ENCODE measurements at regions of chr2 and their contacts with region 1.

Region 1: GRCh38 chr2:47782671-47783485 is at the start of gene MSH6:
- DNase-seq: peak; percentile 95
- ATAC-seq: peak; percentile 87
- H3K4me3 Mint-ChIP-seq: peak within 1 kb of the TSS; percentile 94
- H3K27ac Mint-ChIP-seq: peak within 1 kb of the TSS; percentile 90
- H3K4me1 Mint-ChIP-seq: peaks cover 16% of the 10 kb centered on the region
- H3K27me3 Mint-ChIP-seq: no peaks in the 10 kb centered on the region
- total RNA-seq, gene MSH6: 86.3 to 89.1 TPM

Region 2: GRCh38 chr2:47402805-47403608 is 379.9 kb before region 1 on chr2 and contains the start of gene MSH2:
- POLR2A ChIA-PET with region 1: interaction called, 15 read pairs
- DNase-seq: peak; percentile 89
- ATAC-seq: peak; percentile 92
- H3K4me3 Mint-ChIP-seq: peak within 1 kb of the TSS; percentile 99
- H3K27ac Mint-ChIP-seq: peak within 1 kb of the TSS; percentile 96
- H3K4me1 Mint-ChIP-seq: peaks cover 26% of the 10 kb centered on the region
- H3K27me3 Mint-ChIP-seq: no peaks in the 10 kb centered on the region
- total RNA-seq, gene MSH2: 43.9 to 46.8 TPM

Region 3: DNA sequence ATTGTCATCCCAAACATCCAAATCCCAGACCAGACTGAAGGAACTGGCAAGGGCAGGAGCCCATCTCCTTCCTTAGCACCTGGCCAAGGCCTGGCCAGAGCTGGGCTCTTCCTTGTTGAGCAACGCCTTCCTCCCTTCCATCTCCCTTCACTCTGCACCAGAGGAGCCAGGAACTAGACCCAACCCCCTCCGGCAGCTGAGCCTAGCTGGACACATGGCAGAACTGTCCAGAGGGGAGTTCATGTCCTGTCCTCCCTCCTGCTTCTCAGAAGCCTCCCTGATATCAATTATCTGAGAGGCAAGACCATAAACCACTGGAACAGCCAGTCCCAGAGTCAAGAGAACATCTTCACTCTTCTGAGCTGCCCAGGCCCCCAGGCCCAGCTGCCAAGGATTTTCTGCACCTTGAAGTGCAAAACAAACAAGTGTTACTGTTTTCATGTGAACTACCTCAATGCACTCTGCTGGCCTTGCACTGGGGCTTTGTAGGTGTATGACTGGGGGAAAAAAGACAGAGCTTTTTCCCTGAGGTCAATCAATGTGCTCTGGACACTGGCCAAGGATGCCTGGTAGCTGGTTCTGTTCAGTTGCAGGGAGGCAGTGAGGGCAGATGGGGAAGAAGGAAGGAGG is 107.6 kb before region 1 on chr2:
- POLR2A ChIA-PET with region 1: no interaction called
- DNase-seq: no peak
- ATAC-seq: no peak
- H3K4me3 Mint-ChIP-seq: no peak overlapping the region
- H3K27ac Mint-ChIP-seq: no peak overlapping the region
- H3K4me1 Mint-ChIP-seq: no peaks in the 10 kb centered on the region
- H3K27me3 Mint-ChIP-seq: peaks cover 4% of the 10 kb centered on the region

Region 4: GRCh38 chr2:47719099-47719498 is 63.8 kb before region 1 on chr2:
- POLR2A ChIA-PET with region 1: no interaction called
- DNase-seq: no peak
- ATAC-seq: no peak
- H3K4me3 Mint-ChIP-seq: no peak overlapping the region
- H3K27ac Mint-ChIP-seq: no peak overlapping the region
- H3K4me1 Mint-ChIP-seq: no peaks in the 10 kb centered on the region
- H3K27me3 Mint-ChIP-seq: peaks cover 5% of the 10 kb centered on the region

Region 5: GRCh38 chr2:47751875-47752357 is 31.0 kb before region 1 on chr2:
- POLR2A ChIA-PET with region 1: no interaction called
- DNase-seq: no peak
- ATAC-seq: no peak
- H3K4me3 Mint-ChIP-seq: no peak overlapping the region
- H3K27ac Mint-ChIP-seq: no peak overlapping the region
- H3K4me1 Mint-ChIP-seq: peaks cover 3% of the 10 kb centered on the region
- H3K27me3 Mint-ChIP-seq: peaks cover 4% of the 10 kb centered on the region